Sciatic nerve (tissue), 2 donors: ENCODE measurements at regions of chr2 and their contacts with region 1.

Region 1: GRCh38 chr2:20983844-20984243 is 60.0 kb downstream of the APOB start:
- DNase-seq: no peak
- ATAC-seq: no peak

Region 2: DNA sequence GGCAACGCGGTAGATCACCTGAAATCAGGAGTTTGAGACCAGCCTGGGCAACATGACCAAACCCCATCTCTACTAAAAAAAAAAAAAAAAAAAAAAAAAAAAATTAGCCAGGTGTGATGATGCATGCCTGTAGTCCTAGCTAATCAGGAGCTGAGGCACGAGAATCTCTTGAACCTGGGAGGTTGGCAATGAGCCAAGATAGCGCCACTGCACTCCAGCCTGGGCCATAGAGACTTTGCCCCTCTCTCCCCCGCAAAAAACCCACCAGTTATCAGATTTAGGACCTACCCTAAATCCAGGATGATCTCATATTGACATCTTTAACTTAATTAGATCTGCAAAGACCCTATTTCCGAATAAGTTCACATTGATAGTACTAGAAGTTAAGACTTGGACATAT is 131.7 kb before region 1 on chr2:
- intact Hi-C with region 1: loop called (anchors 5 kb)
- DNase-seq: no peak
- ATAC-seq: no peak